Heart right ventricle (tissue), 16 donors: ENCODE measurements at regions of chr15 and their contacts with region 1.

Region 1: DNA sequence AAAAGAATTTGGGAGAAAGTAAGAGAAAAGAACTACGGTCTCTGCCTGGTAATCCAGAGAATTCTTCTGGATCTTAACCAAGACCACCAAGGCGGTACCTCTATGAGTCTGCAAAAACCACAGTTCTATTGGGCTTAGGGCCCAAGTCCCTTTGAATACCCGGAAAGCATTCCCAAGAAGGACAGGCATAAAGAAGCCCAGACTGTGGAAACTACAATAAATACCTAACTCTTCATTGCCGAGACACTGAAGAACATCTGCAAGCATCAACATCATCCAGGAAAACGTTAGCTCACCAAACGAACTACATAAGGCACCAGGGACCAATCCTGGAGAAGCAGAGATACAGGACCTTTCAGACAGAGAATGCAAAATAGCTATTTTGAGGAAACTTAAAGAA is 162.3 kb upstream of the TMC3 start:
- DNase-seq: no peak
- ATAC-seq: no peak
- H3K4me3 ChIP-seq: no peak overlapping the region
- H3K27ac ChIP-seq: no peak overlapping the region
- H3K4me1 ChIP-seq: peaks cover 0 to 13% (median 4%) of the 10 kb centered on the region in 9 donors
- H3K27me3 ChIP-seq: no peaks in the 10 kb centered on the region
- CTCF ChIP-seq: no peak

Region 2: GRCh38 chr15:81560405-81560804 is 24.0 kb after region 1 on chr15:
- intact Hi-C with region 1: loop called in 1 of 10 experiments (anchors 2 kb)
- DNase-seq: no peak
- ATAC-seq: no peak
- H3K4me3 ChIP-seq: no peak overlapping the region
- H3K27ac ChIP-seq: no peak overlapping the region
- H3K4me1 ChIP-seq: no peaks in the 10 kb centered on the region
- H3K27me3 ChIP-seq: no peaks in the 10 kb centered on the region
- CTCF ChIP-seq: no peak